Right cardiac atrium (tissue), 5 donors: ENCODE measurements at regions of chr11 and their contacts with region 1.

Region 1: DNA sequence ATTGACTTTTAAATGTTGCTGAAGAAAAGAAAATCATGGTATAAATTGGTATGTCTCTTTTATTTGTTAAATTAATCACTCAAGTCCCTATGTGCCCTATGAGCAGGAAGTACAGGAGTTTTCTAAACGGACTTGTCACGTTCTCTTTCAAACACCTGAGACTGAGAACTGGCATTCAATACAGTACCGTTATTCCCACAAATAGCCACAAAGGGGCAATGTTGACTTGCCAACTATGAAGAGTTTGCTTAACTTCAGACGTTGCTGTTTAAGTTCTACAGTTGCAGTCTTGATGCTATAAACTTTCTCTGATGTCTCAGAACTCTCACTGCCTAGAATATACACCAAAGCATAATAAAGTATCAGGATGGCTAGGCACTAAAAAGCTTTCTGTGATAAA is 7.6 kb downstream of the OR56A1 start:
- DNase-seq: no peak
- ATAC-seq: peak; percentile 74 to 78
- H3K4me3 ChIP-seq: no peak overlapping the region
- H3K27ac ChIP-seq: no peak overlapping the region
- H3K4me1 ChIP-seq: no peaks in the 10 kb centered on the region
- H3K27me3 ChIP-seq: no peaks in the 10 kb centered on the region

Region 2: GRCh38 chr11:5938603-5938965 is 84.4 kb before region 1 on chr11:
- intact Hi-C with region 1: no loop called
- DNase-seq: no peak
- ATAC-seq: no peak
- H3K4me3 ChIP-seq: no peak overlapping the region
- H3K27ac ChIP-seq: no peak overlapping the region
- H3K4me1 ChIP-seq: no peaks in the 10 kb centered on the region
- H3K27me3 ChIP-seq: no peaks in the 10 kb centered on the region

Region 3: GRCh38 chr11:6353367-6353987 is 330.5 kb after region 1 on chr11:
- intact Hi-C with region 1: loop called in 3 of 4 experiments (anchors 2 to 10 kb)
- DNase-seq: peak; percentile 35 to 66 (median 57)
- ATAC-seq: peak; percentile 55 to 72
- H3K4me3 ChIP-seq: no peak overlapping the region
- H3K27ac ChIP-seq: no peak overlapping the region
- H3K4me1 ChIP-seq: no peaks in the 10 kb centered on the region
- H3K27me3 ChIP-seq: no peaks in the 10 kb centered on the region

Region 4: DNA sequence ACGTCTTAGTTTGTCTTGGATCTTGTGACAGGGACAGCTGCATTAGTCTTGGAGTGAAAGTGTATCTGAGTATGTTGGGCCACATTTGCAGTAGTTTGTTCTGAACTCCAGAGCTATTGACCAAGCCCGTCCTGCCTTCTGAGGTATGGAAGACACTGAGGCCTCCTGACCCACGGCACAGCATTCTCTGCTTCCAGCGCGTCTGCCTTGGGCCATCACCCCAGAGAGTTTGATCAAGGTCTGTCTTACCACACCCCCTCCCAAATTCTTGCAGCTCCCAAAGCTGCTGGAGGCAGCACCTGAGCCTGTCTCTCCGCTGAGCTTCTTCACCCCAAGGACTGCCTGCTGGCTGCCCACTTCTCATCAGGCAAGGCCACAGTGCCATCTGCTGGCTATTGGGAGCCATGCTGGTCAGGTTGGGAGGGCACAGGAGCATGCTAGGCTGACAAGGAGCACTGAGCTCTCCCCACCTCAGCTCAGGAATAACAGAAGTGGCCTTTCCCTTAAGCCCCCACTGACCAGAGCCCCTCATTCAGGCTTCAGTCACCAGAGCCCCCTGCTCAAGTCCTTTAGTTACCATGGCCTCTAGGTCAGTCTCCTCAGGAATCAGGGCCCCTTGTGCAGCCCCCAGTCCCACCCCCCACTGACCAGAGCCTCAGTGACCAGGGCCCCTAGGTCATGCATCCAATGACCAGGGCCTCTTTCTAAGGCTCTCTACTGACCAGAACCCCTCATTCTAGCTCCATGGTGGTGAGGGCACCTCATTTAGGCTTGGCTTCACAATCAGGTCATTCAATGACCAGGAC is 340.1 kb after region 1 on chr11:
- intact Hi-C with region 1: loop called in 2 of 4 experiments (anchors 5 to 10 kb)
- DNase-seq: peak; percentile 81 to 92 (median 90)
- ATAC-seq: peak; percentile 93
- H3K4me3 ChIP-seq: no peak overlapping the region
- H3K27ac ChIP-seq: peak overlapping the region; percentile 80
- H3K4me1 ChIP-seq: no peaks in the 10 kb centered on the region
- H3K27me3 ChIP-seq: no peaks in the 10 kb centered on the region